ENCODE measurements at regions of chr5 and their contacts with region 1.

Region 1: GRCh38 chr5:87780831-87781760 is 368.4 kb upstream of the CCNH start:
- DNase-seq: peak; percentile 33 to 89 (median 70)
- ATAC-seq: peak; percentile 85 to 99 (median 92)
- H3K4me3 ChIP-seq: no peak overlapping the region
- H3K4me3 Mint-ChIP-seq: no peak overlapping the region
- H3K27ac ChIP-seq: no peak overlapping the region
- H3K27ac Mint-ChIP-seq: no peak overlapping the region
- H3K4me1 ChIP-seq: no peaks in the 10 kb centered on the region
- H3K4me1 Mint-ChIP-seq: peaks cover 0 to 3% (median 3%) of the 10 kb centered on the region in 3 donors
- H3K27me3 ChIP-seq: peaks cover 0 to 8% of the 10 kb centered on the region in 2 experiments
- H3K27me3 Mint-ChIP-seq: peaks cover 25 to 43% of the 10 kb centered on the region in 2 donors

Region 2: DNA sequence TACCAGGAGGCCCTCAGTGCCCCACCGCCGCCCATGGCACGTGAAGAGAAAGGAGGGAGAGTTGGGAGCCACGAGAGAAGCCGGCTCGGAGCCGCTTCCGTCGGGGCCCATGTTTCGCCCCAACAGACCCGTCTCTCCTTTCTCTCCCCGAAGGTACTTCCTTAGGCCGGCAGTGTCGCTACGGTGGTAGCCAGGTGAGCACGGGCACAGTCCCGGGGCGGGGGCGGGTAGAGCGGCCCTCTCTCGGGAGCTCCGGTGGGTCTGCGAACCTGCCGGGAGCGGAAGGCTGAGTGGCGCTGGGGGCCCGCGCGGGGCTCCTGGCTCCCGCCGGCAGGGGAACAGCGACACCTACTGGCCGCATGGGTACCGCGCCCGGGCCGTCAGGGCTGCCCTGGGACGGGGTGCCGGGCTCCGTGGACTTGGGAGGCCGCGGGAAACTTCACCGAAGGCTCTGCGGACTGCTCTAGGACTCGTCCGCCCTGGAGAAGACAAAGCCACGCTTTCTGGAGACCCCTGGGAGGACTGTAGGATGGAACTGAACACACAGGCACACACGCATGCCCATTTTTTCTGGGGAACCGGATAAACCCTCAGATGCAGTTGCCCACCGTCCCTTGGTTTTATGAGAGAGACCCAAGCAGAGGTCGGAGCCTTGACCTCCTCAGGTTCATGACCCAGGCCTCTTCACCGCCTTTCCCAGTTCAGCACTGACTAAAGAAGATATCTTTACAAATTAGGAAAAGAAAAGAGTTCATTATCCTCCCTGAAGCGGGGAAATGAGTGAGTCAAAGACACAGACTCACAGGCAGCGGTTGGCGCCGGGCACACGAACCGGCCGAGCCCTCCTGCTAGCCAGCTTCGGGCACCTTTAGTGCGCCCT is 899.4 kb after region 1 on chr5:
- CTCF ChIA-PET with region 1: interaction called, 19 to 38 read pairs
- POLR2A ChIA-PET with region 1: interaction called in 1 of 2 experiments, 3 read pairs
- DNase-seq: peak; percentile 35 to 84 (median 68)
- ATAC-seq: peak; percentile 83 to 88 (median 88)
- H3K4me3 ChIP-seq: peak overlapping the region; percentile 30 to 38
- H3K4me3 Mint-ChIP-seq: peak overlapping the region in 2 of 3 donors; percentile 39 to 44
- H3K27ac ChIP-seq: no peak overlapping the region
- H3K27ac Mint-ChIP-seq: peak overlapping the region in 1 of 2 donors; percentile 27
- H3K4me1 ChIP-seq: peaks cover 0 to 31% of the 10 kb centered on the region in 2 experiments
- H3K4me1 Mint-ChIP-seq: peaks cover 22 to 42% (median 28%) of the 10 kb centered on the region in 3 donors
- H3K27me3 ChIP-seq: peaks cover 37 to 72% of the 10 kb centered on the region in 2 experiments
- H3K27me3 Mint-ChIP-seq: peaks cover 64 to 83% of the 10 kb centered on the region in 2 donors